ENCODE measurements at regions of chr1 and their contacts with region 1.

Region 1: DNA sequence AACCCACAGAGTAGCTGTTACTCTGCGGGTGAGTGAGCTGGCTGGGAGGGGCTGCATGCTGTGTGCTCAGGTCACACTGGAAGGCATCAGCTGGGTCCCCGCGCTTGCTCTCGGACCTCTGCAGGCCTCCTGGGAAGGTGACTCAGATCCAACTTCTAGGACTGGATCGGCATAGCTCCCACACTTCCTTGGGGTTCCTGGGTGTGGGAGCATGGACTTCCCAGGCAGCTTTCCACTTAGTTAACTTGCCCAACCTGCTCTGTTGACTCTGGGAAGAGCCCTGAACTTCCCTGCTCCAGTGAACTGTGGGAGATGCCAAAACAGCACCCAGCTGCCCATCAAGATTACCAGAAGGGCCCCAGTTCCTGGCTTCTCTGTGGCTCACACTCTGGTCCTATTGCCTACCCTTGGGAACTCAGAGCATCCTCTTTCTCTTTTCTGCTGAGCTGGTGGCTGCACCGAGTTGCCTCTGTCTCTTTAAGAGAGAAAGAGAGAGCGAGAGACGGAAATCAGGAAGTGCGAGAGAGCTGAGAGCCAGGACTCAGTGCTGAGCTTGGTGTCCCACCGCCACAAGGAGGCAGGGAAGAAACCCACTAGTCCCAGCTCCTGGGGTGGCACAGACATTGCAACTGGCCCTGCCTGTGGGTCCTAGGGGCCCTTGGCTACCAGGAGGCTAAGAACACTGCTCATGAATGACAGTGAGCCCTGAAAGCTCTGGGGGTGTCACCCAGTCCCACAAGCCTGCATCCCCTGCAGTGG is at the start of gene IKBKE:
- DNase-seq: peak; percentile 45
- ATAC-seq: peak; percentile 59
- H3K4me3 Mint-ChIP-seq: peak within 1 kb of the TSS; percentile 90
- H3K27ac Mint-ChIP-seq: peak within 1 kb of the TSS; percentile 93
- H3K4me1 Mint-ChIP-seq: peaks cover 73% of the 10 kb centered on the region
- H3K27me3 Mint-ChIP-seq: no peaks in the 10 kb centered on the region
- CTCF ChIP-seq: no peak
- total RNA-seq, gene IKBKE: 52.9 and 56.3 TPM in 2 replicates

Region 2: GRCh38 chr1:206419250-206419649 is 50.9 kb before region 1 on chr1:
- CTCF ChIA-PET with region 1: no interaction called
- POLR2A ChIA-PET with region 1: no interaction called
- intact Hi-C with region 1: no loop called
- DNase-seq: no peak
- ATAC-seq: no peak
- H3K4me3 Mint-ChIP-seq: no peak overlapping the region
- H3K27ac Mint-ChIP-seq: no peak overlapping the region
- H3K4me1 Mint-ChIP-seq: peaks cover 6% of the 10 kb centered on the region
- H3K27me3 Mint-ChIP-seq: no peaks in the 10 kb centered on the region
- CTCF ChIP-seq: no peak

Region 3: DNA sequence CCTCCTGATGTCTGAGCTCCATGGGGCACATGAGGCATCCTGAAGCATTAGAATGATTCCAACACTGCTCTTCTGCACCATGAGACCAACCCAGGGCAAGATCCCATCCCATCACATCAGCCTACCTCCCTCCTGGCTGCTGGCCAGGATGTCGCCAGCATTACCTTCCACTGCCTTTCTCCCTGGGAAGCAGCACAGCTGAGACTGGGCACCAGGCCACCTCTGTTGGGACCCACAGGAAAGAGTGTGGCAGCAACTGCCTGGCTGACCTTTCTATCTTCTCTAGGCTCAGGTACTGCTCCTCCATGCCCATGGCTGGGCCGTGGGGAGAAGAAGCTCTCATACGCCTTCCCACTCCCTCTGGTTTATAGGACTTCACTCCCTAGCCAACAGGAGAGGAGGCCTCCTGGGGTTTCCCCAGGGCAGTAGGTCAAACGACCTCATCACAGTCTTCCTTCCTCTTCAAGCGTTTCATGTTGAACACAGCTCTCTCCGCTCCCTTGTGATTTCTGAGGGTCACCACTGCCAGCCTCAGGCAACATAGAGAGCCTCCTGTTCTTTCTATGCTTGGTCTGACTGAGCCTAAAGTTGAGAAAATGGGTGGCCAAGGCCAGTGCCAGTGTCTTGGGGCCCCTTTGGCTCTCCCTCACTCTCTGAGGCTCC is 26.1 kb after region 1 on chr1:
- CTCF ChIA-PET with region 1: no interaction called
- POLR2A ChIA-PET with region 1: interaction called, 22 read pairs
- intact Hi-C with region 1: no loop called
- DNase-seq: peak; percentile 31
- ATAC-seq: peak; percentile 54
- H3K4me3 Mint-ChIP-seq: peak overlapping the region; percentile 58
- H3K27ac Mint-ChIP-seq: peak overlapping the region; percentile 84
- H3K4me1 Mint-ChIP-seq: peaks cover 44% of the 10 kb centered on the region
- H3K27me3 Mint-ChIP-seq: no peaks in the 10 kb centered on the region
- CTCF ChIP-seq: no peak

Region 4: DNA sequence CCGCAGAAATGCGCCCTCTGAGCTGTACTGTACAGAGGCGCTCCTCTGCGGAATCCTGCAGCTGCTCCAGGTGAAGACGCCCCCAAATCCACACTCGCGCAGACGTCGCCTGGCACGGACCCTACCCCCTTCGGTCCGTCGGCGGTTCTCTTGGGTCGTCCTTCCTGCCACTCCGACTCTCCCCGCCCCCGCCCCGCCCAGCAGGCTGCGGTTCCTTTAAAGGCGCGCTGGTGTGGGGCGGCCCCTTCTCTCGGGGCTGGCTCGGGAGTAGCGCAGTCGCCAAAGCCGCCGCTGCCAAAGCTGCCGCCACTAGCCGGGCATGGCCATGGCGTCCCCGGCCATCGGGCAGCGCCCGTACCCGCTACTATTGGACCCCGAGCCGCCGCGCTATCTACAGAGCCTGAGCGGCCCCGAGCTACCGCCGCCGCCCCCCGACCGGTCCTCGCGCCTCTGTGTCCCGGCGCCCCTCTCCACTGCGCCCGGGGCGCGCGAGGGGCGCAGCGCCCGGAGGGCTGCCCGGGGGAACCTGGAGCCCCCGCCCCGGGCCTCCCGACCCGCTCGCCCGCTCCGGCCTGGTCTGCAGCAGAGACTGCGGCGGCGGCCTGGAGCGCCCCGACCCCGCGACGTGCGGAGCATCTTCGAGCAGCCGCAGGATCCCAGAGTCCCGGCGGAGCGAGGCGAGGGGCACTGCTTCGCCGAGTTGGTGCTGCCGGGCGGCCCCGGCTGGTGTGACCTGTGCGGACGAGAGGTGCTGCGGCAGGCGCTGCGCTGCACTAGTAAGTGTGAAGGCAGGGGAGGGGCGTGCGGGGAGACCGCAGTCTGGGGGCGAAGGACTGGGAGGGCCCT is 37.4 kb after region 1 on chr1 and contains the start of gene RASSF5:
- CTCF ChIA-PET with region 1: no interaction called
- POLR2A ChIA-PET with region 1: no interaction called
- intact Hi-C with region 1: loop called (anchors 1 kb)
- DNase-seq: peak; percentile 80
- ATAC-seq: peak; percentile 91
- H3K4me3 Mint-ChIP-seq: peak within 1 kb of the TSS; percentile 82
- H3K27ac Mint-ChIP-seq: peak within 1 kb of the TSS; percentile 24
- H3K4me1 Mint-ChIP-seq: peaks cover 33% of the 10 kb centered on the region
- H3K27me3 Mint-ChIP-seq: peaks cover 17% of the 10 kb centered on the region
- CTCF ChIP-seq: no peak
- total RNA-seq, gene RASSF5: 114 and 116 TPM in 2 replicates

Region 5: DNA sequence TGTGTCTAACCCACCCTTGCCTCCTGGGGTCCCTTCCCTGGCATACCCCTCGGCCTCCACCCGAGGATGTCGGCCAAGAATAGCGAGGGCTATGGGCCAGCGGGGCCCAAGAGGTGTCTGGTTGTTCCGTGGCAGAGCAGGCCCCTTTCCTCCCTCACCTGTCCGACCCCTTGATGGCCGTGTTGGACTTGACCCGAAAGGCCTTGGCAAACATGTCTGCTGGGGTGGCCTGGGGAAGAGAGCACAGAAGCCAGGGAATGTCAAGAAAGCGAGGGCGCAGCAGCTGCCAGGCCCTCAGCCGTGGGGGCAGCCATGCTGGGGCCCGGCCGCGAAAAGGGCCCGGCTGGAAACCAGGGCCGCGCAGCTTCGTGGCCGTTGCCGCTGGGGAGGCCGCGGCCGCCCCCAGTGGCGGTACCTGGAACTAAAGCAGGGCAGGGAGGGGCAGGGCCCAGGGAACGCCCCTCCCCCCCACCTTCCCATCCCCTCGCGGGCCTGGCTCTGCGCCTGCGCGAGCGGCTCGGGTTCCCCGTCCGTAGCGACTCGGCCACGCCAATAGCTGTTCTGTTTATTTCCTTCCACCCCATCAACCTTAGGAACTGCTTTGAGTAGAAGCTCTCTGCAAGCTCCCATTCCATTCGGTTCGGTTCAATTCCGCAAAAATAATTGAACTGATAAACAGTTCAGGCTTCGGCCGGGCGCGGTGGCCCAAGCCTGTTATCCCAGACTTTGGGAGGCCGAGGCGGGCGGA is 142.2 kb after region 1 on chr1 and contains the start of gene EIF2D:
- CTCF ChIA-PET with region 1: interaction called, 6 read pairs
- POLR2A ChIA-PET with region 1: interaction called, 15 read pairs
- intact Hi-C with region 1: no loop called
- DNase-seq: peak; percentile 95
- ATAC-seq: peak; percentile 98
- H3K4me3 Mint-ChIP-seq: peak within 1 kb of the TSS; percentile 96
- H3K27ac Mint-ChIP-seq: peak within 1 kb of the TSS; percentile 97
- H3K4me1 Mint-ChIP-seq: peaks cover 30% of the 10 kb centered on the region
- H3K27me3 Mint-ChIP-seq: no peaks in the 10 kb centered on the region
- CTCF ChIP-seq: peak; percentile 72
- total RNA-seq, gene EIF2D: 61.2 and 65.4 TPM in 2 replicates

Region 6: GRCh38 chr1:206674745-206675175 is 204.6 kb after region 1 on chr1:
- CTCF ChIA-PET with region 1: no interaction called
- POLR2A ChIA-PET with region 1: interaction called, 4 read pairs
- intact Hi-C with region 1: loop called (anchors 5 kb)
- DNase-seq: no peak
- ATAC-seq: no peak
- H3K4me3 Mint-ChIP-seq: no peak overlapping the region
- H3K27ac Mint-ChIP-seq: peak overlapping the region; percentile 73
- H3K4me1 Mint-ChIP-seq: peaks cover 24% of the 10 kb centered on the region
- H3K27me3 Mint-ChIP-seq: peaks cover 5% of the 10 kb centered on the region
- CTCF ChIP-seq: no peak